Dendritic cell treated with granulocyte-macrophage colony-stimulating factor and Interleukin-4, amounts not matched to agents 40 ng/mL and 50 ng/mL, for 4 days (primary cell): ENCODE measurements at regions of chr1 and their contacts with region 1.

Region 1: DNA sequence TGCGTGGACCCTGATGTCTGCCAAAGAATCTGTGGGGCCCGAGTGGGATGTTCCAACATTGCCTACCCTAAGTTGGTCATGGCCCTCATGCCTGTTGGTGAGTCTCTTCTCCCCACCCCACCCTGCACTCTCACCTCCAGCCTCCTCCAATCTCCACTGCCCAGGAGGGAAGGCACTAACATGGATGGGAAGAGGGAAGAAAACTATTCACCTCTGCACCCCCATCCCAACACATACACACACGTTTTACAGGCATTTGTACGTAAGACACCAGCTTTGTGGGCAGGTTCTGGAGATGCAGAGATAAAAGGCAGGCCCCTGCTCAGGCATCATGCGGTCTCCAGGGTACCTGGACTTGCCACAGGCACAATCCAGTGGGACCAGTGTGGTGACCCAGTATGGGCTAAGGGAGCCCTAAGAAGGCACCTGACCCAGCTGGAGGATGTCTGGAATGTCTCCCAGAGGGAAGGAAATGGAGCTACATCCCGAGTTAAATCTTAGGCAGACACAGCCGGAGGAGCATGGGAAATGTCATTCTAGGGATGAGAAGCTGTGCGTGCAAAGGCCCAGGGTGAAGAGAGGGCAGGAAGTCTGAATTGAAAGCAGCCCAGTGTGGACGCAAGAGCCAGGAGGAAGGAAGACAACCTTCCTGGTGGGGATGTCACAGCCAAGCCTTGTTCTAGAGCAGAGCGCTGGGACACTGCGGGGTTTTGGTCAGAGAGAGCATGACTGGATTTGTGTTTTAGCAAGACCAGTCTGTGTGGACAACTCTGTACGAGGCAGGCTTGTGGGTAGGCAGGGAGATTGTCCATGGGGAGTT is 11.4 kb downstream of the SLC5A9 start:
- H3K4me3 Mint-ChIP-seq: no peak overlapping the region
- H3K27ac Mint-ChIP-seq: no peak overlapping the region
- H3K4me1 Mint-ChIP-seq: peaks cover 5% of the 10 kb centered on the region
- H3K27me3 Mint-ChIP-seq: peaks cover 8% of the 10 kb centered on the region

Region 2: GRCh38 chr1:47997289-47998200 is 236.3 kb before region 1 on chr1 and contains the start of gene TRABD2B:
- intact Hi-C with region 1: loop called (anchors 2 kb)
- H3K4me3 Mint-ChIP-seq: peak within 1 kb of the TSS; percentile 73
- H3K27ac Mint-ChIP-seq: no peak within 1 kb of the TSS
- H3K4me1 Mint-ChIP-seq: peaks cover 5% of the 10 kb centered on the region
- H3K27me3 Mint-ChIP-seq: peaks cover 67% of the 10 kb centered on the region

Region 3: GRCh38 chr1:48214820-48215219 is 19.1 kb before region 1 on chr1:
- intact Hi-C with region 1: no loop called
- H3K4me3 Mint-ChIP-seq: no peak overlapping the region
- H3K27ac Mint-ChIP-seq: no peak overlapping the region
- H3K4me1 Mint-ChIP-seq: peaks cover 15% of the 10 kb centered on the region
- H3K27me3 Mint-ChIP-seq: peaks cover 8% of the 10 kb centered on the region

Region 4: DNA sequence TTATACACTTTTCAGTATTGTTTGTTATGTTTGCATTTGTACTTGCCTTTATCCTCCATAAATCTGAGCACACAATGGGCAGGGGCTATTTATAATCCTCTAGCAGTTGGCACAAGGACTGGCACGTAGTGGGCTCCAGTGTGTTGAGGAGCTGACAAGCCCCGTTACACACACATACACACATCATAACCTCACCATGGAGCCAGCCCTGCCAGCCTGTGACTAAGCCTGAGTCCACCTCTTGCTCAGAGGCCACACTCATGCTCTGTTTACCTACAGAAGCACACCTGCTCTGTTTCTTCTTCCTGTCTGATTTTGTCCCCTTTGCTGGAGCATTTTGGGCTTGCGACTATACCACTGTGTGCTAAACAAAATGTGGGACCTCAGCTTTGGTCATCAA is 302.6 kb after region 1 on chr1:
- intact Hi-C with region 1: no loop called
- H3K4me3 Mint-ChIP-seq: no peak overlapping the region
- H3K27ac Mint-ChIP-seq: no peak overlapping the region
- H3K4me1 Mint-ChIP-seq: no peaks in the 10 kb centered on the region
- H3K27me3 Mint-ChIP-seq: peaks cover 11% of the 10 kb centered on the region